Activated CD4-positive, alpha-beta T cell treated with anti-CD3 and anti-CD28 coated beads for 36 hours (primary cell): ENCODE measurements at regions of chr11 and their contacts with region 1.

Region 1: GRCh38 chr11:96389720-96390487 is at the starts of genes CCDC82 and JRKL:
- DNase-seq: peak; percentile 99
- ATAC-seq: peak; percentile 97
- H3K4me3 Mint-ChIP-seq: peak within 1 kb of the TSS; percentile 90
- H3K27ac Mint-ChIP-seq: peak within 1 kb of the TSS; percentile 82
- H3K4me1 Mint-ChIP-seq: peaks cover 66% of the 10 kb centered on the region
- H3K27me3 Mint-ChIP-seq: no peaks in the 10 kb centered on the region
- total RNA-seq, gene CCDC82: 32.1 to 38.3 TPM
- total RNA-seq, gene JRKL: 12.9 to 15.7 TPM

Region 2: GRCh38 chr11:94543695-94544645 is 1845.9 kb before region 1 on chr11 and contains the start of gene FUT4:
- CTCF ChIA-PET with region 1: no interaction called
- POLR2A ChIA-PET with region 1: no interaction called
- intact Hi-C with region 1: loop called in 1 of 2 experiments (anchors 5 kb)
- DNase-seq: peak; percentile 87
- ATAC-seq: peak; percentile 83
- H3K4me3 Mint-ChIP-seq: peak within 1 kb of the TSS; percentile 92
- H3K27ac Mint-ChIP-seq: peak within 1 kb of the TSS; percentile 99
- H3K4me1 Mint-ChIP-seq: peaks cover 39% of the 10 kb centered on the region
- H3K27me3 Mint-ChIP-seq: no peaks in the 10 kb centered on the region
- total RNA-seq, gene FUT4: 4.4 to 4.9 TPM

Region 3: GRCh38 chr11:95067039-95067840 is 1322.7 kb before region 1 on chr11:
- CTCF ChIA-PET with region 1: no interaction called
- POLR2A ChIA-PET with region 1: no interaction called
- intact Hi-C with region 1: loop called in 1 of 2 experiments (anchors 5 kb)
- DNase-seq: peak; percentile 87
- ATAC-seq: peak; percentile 68
- H3K4me3 Mint-ChIP-seq: peak overlapping the region; percentile 97
- H3K27ac Mint-ChIP-seq: peak overlapping the region; percentile 92
- H3K4me1 Mint-ChIP-seq: peaks cover 25% of the 10 kb centered on the region
- H3K27me3 Mint-ChIP-seq: peaks cover 2% of the 10 kb centered on the region

Region 4: DNA sequence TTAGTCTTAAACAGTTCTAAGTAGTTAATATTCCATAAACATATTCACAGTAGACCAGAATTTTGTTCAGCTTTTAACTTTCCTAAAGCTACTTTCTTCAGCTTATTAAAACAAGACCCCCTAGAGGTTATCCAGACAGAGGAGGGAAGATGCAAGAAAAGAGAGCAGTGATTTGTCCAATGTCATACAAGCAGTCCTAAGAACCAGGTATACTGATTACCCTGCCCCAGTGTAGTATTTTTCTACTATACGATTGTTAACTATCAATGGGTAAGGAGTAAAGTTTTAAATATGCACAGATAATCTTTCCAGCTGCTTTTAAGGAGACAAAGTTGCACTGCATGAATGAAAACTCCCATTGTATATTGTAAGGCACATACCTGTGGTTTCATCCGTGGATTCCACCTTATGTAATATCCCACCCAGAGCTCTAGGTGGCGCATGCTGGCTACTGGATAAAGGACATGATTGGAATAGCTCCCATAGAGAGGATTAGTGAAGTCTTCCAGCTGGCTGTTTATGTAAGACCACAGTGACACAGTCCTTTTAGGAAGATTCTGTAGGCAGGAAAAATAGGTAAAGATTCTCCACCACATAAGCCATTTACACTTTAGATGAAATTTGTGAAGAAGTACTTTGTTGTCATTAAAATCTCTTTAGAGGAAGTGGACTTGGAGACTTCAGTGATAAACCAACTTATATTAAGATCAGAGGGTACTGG is 554.0 kb before region 1 on chr11:
- CTCF ChIA-PET with region 1: interaction called, 32 read pairs
- POLR2A ChIA-PET with region 1: no interaction called
- intact Hi-C with region 1: loop called (anchors 1 to 2 kb)
- DNase-seq: peak; percentile 69
- ATAC-seq: peak; percentile 87
- H3K4me3 Mint-ChIP-seq: no peak overlapping the region
- H3K27ac Mint-ChIP-seq: no peak overlapping the region
- H3K4me1 Mint-ChIP-seq: peaks cover 6% of the 10 kb centered on the region
- H3K27me3 Mint-ChIP-seq: no peaks in the 10 kb centered on the region

Region 5: GRCh38 chr11:95923728-95924413 is 466.0 kb before region 1 on chr11 and contains the start of gene MTMR2:
- CTCF ChIA-PET with region 1: interaction called, 4 read pairs
- POLR2A ChIA-PET with region 1: no interaction called
- intact Hi-C with region 1: loop called (anchors 2 to 5 kb)
- DNase-seq: peak; percentile 75
- ATAC-seq: peak; percentile 93
- H3K4me3 Mint-ChIP-seq: peak within 1 kb of the TSS; percentile 99
- H3K27ac Mint-ChIP-seq: peak within 1 kb of the TSS; percentile 99
- H3K4me1 Mint-ChIP-seq: peaks cover 25% of the 10 kb centered on the region
- H3K27me3 Mint-ChIP-seq: no peaks in the 10 kb centered on the region
- total RNA-seq, gene MTMR2: 32.8 to 36.5 TPM

Region 6: GRCh38 chr11:96054870-96055705 is 334.8 kb before region 1 on chr11:
- CTCF ChIA-PET with region 1: interaction called, 11 read pairs
- POLR2A ChIA-PET with region 1: no interaction called
- intact Hi-C with region 1: loop called (anchors 1 to 2 kb)
- DNase-seq: no peak
- ATAC-seq: peak; percentile 20
- H3K4me3 Mint-ChIP-seq: no peak overlapping the region
- H3K27ac Mint-ChIP-seq: peak overlapping the region; percentile 88
- H3K4me1 Mint-ChIP-seq: peaks cover 86% of the 10 kb centered on the region
- H3K27me3 Mint-ChIP-seq: no peaks in the 10 kb centered on the region

Region 7: DNA sequence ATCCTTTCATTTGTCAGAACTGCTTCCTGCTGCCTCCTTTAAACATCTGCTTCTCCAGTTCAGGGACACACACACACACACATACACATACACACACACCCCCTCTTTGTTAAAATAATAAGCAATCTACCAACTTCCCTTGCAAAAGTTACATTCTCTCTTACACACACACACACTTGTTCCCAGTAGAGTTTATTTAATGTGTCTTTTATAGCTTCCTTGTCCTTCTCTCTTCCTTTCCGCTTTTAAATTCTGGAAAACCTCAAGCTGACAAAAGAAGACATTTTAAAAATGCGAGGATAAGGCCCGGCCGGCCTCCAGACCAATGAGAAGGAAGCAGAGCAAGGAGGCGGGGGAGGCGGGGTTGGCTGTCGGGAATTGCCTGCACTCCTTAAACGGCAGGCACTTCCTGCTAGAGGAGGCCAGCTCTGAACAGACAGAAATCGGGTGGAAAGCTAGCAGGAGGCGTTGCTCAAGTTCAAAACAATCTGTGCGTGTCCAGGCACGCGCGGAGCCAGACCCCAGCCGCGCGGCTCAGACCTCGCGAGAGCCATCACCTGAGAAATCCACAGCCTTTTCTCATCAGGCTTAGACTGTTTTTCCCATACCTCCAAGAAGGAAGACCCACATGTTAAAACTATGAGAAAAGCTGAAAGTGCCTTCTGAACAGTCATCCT is 146.8 kb before region 1 on chr11:
- CTCF ChIA-PET with region 1: interaction called, 5 read pairs
- POLR2A ChIA-PET with region 1: no interaction called
- intact Hi-C with region 1: loop called in 1 of 2 experiments (anchors 2 kb)
- DNase-seq: peak; percentile 92
- ATAC-seq: peak; percentile 82
- H3K4me3 Mint-ChIP-seq: peak overlapping the region; percentile 73
- H3K27ac Mint-ChIP-seq: peak overlapping the region; percentile 94
- H3K4me1 Mint-ChIP-seq: peaks cover 62% of the 10 kb centered on the region
- H3K27me3 Mint-ChIP-seq: no peaks in the 10 kb centered on the region

Region 8: GRCh38 chr11:96990914-96991313 is 601.0 kb after region 1 on chr11:
- CTCF ChIA-PET with region 1: no interaction called
- POLR2A ChIA-PET with region 1: no interaction called
- intact Hi-C with region 1: no loop called
- DNase-seq: no peak
- ATAC-seq: no peak
- H3K4me3 Mint-ChIP-seq: no peak overlapping the region
- H3K27ac Mint-ChIP-seq: no peak overlapping the region
- H3K4me1 Mint-ChIP-seq: no peaks in the 10 kb centered on the region
- H3K27me3 Mint-ChIP-seq: no peaks in the 10 kb centered on the region